Aorta (tissue), 5 donors: ENCODE measurements at regions of chr14 and their contacts with region 1.

Region 1: GRCh38 chr14:64823305-64823861 is 56.3 kb downstream of the SPTB start:
- DNase-seq: peak; percentile 90 to 93
- ATAC-seq: peak; percentile 83
- H3K4me3 ChIP-seq: no peak overlapping the region
- H3K27ac ChIP-seq: no peak overlapping the region
- H3K4me1 ChIP-seq: no peaks in the 10 kb centered on the region
- H3K27me3 ChIP-seq: no peaks in the 10 kb centered on the region

Region 2: GRCh38 chr14:64891839-64892375 is 68.5 kb after region 1 on chr14:
- intact Hi-C with region 1: loop called (anchors 5 kb)
- DNase-seq: no peak
- ATAC-seq: peak; percentile 62
- H3K4me3 ChIP-seq: no peak overlapping the region
- H3K27ac ChIP-seq: no peak overlapping the region
- H3K4me1 ChIP-seq: no peaks in the 10 kb centered on the region
- H3K27me3 ChIP-seq: no peaks in the 10 kb centered on the region

Region 3: DNA sequence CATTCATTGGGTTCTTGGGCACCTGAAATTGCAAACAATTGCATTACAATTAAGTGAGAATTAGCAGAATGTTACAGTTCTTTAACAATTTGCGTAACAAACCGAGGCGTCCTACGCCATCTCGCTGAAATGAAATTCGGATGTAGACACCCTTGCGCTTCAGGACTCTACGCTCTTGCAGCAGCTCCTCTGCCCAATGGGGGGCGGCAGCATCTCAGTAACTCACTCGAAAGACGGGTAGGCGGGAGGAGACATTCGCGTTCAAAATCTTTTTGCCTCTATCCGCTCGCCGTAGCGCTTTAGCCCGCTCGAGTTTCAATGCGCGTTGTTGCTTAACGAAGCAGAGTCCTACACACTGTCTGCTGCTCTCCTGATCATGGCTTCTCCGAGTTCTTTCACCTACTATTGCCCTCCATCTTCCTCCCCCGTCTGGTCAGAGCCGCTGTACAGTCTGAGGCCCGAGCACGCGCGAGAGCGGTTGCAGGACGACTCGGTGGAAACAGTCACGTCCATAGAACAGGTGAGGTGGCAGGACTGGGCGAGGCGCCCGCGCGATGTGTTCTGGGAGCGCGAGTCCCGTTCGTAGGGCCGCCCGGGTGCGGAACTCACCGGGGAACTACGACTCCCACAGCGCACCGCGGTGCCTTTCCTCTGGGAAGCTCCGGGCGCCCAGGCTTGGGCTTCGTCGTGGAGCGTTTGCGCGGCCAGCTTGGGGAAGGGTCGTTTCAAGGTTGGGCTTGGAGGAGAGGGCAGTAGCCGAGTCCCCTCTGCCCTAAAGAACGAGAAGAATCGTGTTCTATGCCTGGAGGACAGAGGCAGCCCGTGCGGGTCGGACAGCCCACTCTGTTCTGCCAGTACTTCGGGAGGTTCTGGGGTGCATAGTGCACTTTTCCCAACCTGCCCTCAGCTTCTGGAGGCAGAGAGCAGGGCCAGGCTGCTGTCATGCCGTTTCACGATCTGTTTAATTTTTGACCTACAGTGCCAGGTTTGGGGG is 163.5 kb after region 1 on chr14 and contains the start of gene FNTB:
- intact Hi-C with region 1: loop called (anchors 5 kb)
- DNase-seq: peak; percentile 98
- ATAC-seq: peak; percentile 98
- H3K4me3 ChIP-seq: peak within 1 kb of the TSS; percentile 62 to 78
- H3K27ac ChIP-seq: peak within 1 kb of the TSS in 1 of 2 donors; percentile 81
- H3K4me1 ChIP-seq: no peaks in the 10 kb centered on the region
- H3K27me3 ChIP-seq: no peaks in the 10 kb centered on the region
- total RNA-seq, gene FNTB: 13.2 to 22.5 TPM